ENCODE measurements at regions of chr12 and their contacts with region 1.

Region 1: GRCh38 chr12:25052196-25052913 is 103.5 kb upstream of the BCAT1 start:
- DNase-seq: peak; percentile 93
- ATAC-seq: peak; percentile 79
- H3K4me3 ChIP-seq: peak overlapping the region; percentile 83
- H3K27ac ChIP-seq: peak overlapping the region; percentile 92
- H3K4me1 ChIP-seq: peaks cover 14% of the 10 kb centered on the region; the same call in 1 of the 2 replicates
- H3K27me3 ChIP-seq: no peaks in the 10 kb centered on the region
- CTCF ChIP-seq: no peak
- EP300 ChIP-seq: peak in 1 of 2 experiments; percentile 72; a peak in 2 of 4 replicates
- POLR2A ChIP-seq: peak; percentile 72
- RAD21 ChIP-seq: no peak

Region 2: DNA sequence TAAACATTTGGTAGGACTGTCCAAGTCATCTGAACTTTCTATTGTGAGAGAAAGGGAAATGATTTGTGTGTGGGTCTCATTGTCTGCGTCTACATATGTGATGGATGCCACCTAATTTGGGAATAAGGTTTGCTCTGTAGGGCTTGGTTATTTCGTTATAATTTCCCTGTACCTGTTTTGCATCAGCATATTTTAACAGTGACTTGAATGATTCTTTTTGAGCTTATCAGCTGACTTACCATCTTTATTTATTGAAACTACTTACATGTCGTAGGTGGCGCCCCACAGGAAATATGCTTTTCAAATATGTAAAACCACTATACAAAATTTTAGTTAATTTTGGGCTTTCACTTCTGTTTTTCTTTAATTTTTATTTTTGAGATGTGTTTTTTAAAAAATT is 47.0 kb before region 1 on chr12:
- CTCF ChIA-PET with region 1: interaction called, 141 read pairs
- POLR2A ChIA-PET with region 1: interaction called, 297 read pairs
- RAD21 ChIA-PET with region 1: interaction called, 462 read pairs
- SMC1A ChIA-PET with region 1: interaction called, 526 read pairs
- in situ Hi-C with region 1: loop called (anchors 5 kb)
- intact Hi-C with region 1: no loop called
- DNase-seq: peak; percentile 82
- ATAC-seq: peak; percentile 65
- H3K4me3 ChIP-seq: peak overlapping the region; percentile 4; the same call in 1 of the 2 replicates
- H3K27ac ChIP-seq: peak overlapping the region; percentile 58
- H3K4me1 ChIP-seq: peaks cover 40% of the 10 kb centered on the region
- H3K27me3 ChIP-seq: no peaks in the 10 kb centered on the region
- CTCF ChIP-seq: no peak
- EP300 ChIP-seq: peak; percentile 76 to 83; a peak in 3 of 4 replicates
- POLR2A ChIP-seq: no peak
- RAD21 ChIP-seq: no peak

Region 3: DNA sequence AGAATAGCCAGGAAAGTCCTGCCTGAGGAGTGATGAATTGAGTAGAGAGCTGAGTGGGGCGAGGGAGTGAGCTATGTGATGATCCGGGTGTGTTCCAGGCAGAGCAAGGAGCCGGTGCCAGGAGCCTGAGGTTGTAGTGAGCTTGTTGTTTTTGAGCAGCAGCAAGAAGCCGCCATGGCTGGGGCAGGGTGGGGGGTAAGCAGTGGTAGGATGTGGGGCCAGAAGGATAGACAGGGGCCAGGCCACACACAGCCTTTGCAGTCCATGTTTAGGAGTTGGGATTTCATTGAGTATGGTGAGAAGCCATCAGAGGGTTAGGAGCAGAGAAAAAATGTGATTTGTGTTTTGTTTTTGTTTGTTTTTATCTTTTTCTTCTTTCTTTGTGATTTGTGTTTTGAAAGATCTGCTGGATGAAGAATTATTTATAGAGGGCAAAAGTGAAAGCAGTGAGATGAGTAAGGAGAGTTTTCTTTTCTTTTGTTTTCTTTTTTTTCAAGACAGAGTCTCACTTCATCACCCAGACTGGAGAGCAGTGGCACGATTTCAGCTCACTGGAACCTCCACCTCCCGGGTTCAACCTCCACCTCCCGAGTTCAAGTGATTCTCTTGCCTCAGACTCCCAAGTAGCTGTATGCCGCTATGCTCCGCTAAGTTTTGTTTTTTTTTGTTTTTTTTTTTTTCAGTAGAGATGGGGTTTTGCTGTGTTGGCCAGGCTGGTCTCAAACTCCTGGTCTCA is 11.2 kb before region 1 on chr12:
- CTCF ChIA-PET with region 1: interaction called, 11 read pairs
- POLR2A ChIA-PET with region 1: interaction called, 11 read pairs
- RAD21 ChIA-PET with region 1: interaction called, 18 read pairs
- SMC1A ChIA-PET with region 1: interaction called, 41 read pairs
- in situ Hi-C with region 1: no loop called
- intact Hi-C with region 1: no loop called
- DNase-seq: no peak
- ATAC-seq: peak; percentile 90
- H3K4me3 ChIP-seq: 0 out of 2 replicates have a peak overlapping the region, but pooled peaks have one; percentile 26
- H3K27ac ChIP-seq: peak overlapping the region; percentile 44; the same call in 1 of the 2 replicates
- H3K4me1 ChIP-seq: peaks cover 12% of the 10 kb centered on the region
- H3K27me3 ChIP-seq: no peaks in the 10 kb centered on the region
- CTCF ChIP-seq: no peak
- EP300 ChIP-seq: no peak
- POLR2A ChIP-seq: no peak
- RAD21 ChIP-seq: no peak

Region 4: GRCh38 chr12:25107920-25108319 is 55.6 kb after region 1 on chr12:
- CTCF ChIA-PET with region 1: interaction called, 8 read pairs
- POLR2A ChIA-PET with region 1: no interaction called
- RAD21 ChIA-PET with region 1: interaction called, 22 read pairs
- SMC1A ChIA-PET with region 1: interaction called, 10 read pairs
- in situ Hi-C with region 1: no loop called
- intact Hi-C with region 1: no loop called
- DNase-seq: peak; percentile 64
- ATAC-seq: peak; percentile 86
- H3K4me3 ChIP-seq: no peak overlapping the region
- H3K27ac ChIP-seq: peak overlapping the region; percentile 60
- H3K4me1 ChIP-seq: peaks cover 16% of the 10 kb centered on the region
- H3K27me3 ChIP-seq: no peaks in the 10 kb centered on the region
- CTCF ChIP-seq: no peak
- EP300 ChIP-seq: peak; percentile 33 to 95; a peak in 3 of 4 replicates
- POLR2A ChIP-seq: no peak
- RAD21 ChIP-seq: no peak